Breast epithelium (tissue), 4 donors: ENCODE measurements at regions of chr19 and their contacts with region 1.

Region 1: DNA sequence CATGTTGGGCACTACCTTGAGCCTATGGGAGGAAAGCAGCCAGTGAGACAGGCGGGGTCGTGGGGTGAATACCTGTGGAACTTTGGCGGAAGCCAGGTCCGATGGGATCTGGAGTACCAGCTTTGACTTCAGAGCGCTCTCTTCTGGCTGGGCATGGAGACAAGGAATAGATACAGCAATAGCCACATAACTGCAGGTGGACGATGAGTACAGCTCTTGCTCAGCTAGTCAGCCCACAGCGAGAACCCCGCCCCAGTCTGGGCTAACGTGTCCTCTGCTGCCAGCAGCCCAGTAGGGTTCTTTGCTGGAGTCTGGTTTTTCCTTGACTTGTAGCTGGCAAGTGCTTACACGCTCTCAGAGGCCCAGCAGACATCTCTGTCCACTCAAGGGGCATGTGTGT is 83.4 kb downstream of the SIPA1L3 start:
- DNase-seq: peak; percentile 65 to 72
- H3K4me3 ChIP-seq: no peak overlapping the region
- H3K27ac ChIP-seq: peak overlapping the region; percentile 66 to 80
- H3K4me1 ChIP-seq: peaks cover 6 to 11% of the 10 kb centered on the region in 2 donors
- H3K27me3 ChIP-seq: no peaks in the 10 kb centered on the region
- CTCF ChIP-seq: peak in 1 of 3 donors; percentile 36
- POLR2A ChIP-seq: no peak

Region 2: DNA sequence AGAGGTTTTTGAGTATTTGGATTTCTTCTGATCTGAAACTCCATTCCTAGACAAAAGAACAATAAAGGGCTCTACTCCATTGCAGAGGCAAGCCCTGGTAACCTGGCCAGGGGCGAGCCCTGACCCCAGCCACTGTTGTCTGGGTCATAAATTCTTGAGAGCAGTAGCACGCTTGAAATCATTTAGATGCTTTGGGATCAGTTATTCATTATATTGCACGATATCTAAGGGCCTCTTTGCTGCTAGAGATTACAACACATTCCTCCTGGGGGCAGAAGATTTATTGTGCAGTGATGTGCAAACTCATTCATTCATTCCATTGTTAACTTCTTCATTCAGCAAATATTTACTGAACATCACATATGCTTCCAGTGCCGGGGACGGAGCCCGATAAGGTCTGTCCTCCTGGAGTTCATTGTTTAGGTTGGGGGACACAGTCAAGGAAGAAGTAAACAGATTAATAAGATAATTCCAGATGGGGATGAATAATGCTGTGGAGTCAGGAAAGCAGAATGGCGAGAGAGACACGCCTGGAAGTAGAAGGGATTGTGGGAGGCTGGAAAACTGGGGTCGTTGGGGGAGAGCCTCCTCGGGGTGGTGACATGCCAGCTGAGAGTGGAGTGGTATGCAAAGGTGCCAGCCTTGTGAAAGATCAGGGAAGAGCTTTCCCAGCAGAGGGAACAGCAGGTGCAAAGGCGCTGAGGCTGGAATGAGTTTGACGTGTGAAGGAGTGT is 48.4 kb before region 1 on chr19:
- intact Hi-C with region 1: no loop called
- DNase-seq: no peak
- H3K4me3 ChIP-seq: no peak overlapping the region
- H3K27ac ChIP-seq: peak overlapping the region in 1 of 2 donors; percentile 36
- H3K4me1 ChIP-seq: peaks cover 0 to 5% of the 10 kb centered on the region in 2 donors
- H3K27me3 ChIP-seq: no peaks in the 10 kb centered on the region
- CTCF ChIP-seq: no peak
- POLR2A ChIP-seq: no peak

Region 3: DNA sequence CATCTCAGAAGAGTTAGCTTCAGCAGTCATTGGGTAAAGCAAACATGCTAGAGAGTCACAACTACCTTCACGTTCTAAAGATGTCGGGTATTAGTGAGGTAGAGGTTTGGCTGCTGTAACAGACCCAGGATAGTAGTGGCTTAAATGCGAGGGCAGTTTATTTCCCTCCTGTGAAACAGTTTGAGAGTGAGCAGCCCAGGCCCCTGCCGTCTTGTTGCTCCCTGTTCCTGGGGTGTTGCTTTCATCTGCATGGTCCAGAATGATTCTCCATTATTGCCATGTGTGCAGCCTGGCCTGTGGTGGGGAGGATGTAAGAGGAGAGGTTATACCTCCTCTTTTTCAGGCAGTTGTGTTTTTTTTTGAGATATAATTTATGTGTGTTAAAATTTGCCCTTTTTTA is 19.7 kb before region 1 on chr19:
- intact Hi-C with region 1: loop called (anchors 1 kb)
- DNase-seq: no peak
- H3K4me3 ChIP-seq: no peak overlapping the region
- H3K27ac ChIP-seq: no peak overlapping the region
- H3K4me1 ChIP-seq: peaks cover 0 to 7% of the 10 kb centered on the region in 2 donors
- H3K27me3 ChIP-seq: no peaks in the 10 kb centered on the region
- CTCF ChIP-seq: no peak
- POLR2A ChIP-seq: no peak